ENCODE measurements at regions of chr18 and their contacts with region 1.

Region 1: GRCh38 chr18:13726232-13726971 is at the starts of genes FAM210A and RNMT:
- DNase-seq: peak; percentile 96 to 98 (median 98)
- ATAC-seq: peak; percentile 96 to 98 (median 98)
- H3K4me3 ChIP-seq: peak within 1 kb of the TSS; percentile 72 to 97 (median 86)
- H3K27ac ChIP-seq: peak within 1 kb of the TSS; percentile 84 to 99 (median 91)
- H3K4me1 ChIP-seq: peaks cover 0 to 50% (median 24%) of the 10 kb centered on the region in 12 donors
- H3K27me3 ChIP-seq: no peaks in the 10 kb centered on the region
- CTCF ChIP-seq: peak in 5 of 12 donors; percentile 19 to 46 (median 41)
- POLR2A ChIP-seq: peak in 1 of 2 donors; percentile 71
- total RNA-seq, gene FAM210A: 29.3 to 66.4 (median 48.7) TPM
- total RNA-seq, gene RNMT: 19.9 to 38.0 (median 26.6) TPM

Region 2: DNA sequence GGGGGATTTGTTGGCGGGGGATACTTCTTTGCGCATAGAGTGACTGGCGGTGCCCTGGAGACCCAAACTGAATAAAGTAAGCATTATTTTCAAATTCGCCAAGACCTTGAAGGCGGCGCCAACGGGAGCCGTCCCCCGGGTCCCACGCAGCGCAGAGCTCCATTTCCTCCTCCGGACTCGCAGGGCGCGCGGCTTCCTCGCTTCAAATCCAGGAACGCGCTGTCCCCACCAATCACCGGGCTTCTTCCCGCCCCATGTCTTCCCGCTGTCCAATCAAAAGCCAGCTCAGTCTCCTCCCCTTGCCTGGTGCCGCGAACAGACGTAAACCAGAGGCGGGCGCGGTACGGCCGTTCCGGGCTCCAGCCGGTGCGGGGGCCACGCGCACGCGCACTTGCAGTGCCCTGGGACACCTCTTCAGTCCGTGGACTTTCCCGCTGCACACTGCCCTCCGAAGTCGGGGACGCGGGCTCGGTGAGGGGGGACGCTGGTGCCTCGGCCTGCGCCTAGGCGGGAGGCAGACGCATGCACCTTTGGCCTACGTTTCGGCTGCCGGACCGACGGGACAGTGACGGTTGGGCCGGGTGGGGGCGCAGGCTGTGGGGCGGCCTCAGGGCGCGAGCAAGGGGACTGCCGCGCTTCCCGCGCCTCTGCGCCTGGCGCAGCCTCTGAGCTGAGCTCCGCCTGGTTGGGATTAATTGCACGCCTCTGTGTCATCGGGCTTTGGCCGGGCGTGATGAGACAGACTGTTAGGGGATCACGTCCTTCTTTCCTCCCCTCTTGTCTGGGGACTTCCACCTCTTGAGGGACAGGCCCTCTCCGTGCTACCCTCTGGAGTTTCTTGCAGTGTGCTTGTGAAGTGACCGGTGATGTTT is 735.2 kb before region 1 on chr18 and contains the start of gene CEP192:
- intact Hi-C with region 1: loop called in 1 of 10 experiments (anchors 10 kb)
- DNase-seq: peak; percentile 97 to 98 (median 98)
- ATAC-seq: peak; percentile 98 to 99 (median 99)
- H3K4me3 ChIP-seq: peak within 1 kb of the TSS; percentile 52 to 97 (median 84)
- H3K27ac ChIP-seq: peak within 1 kb of the TSS; percentile 69 to 95 (median 87)
- H3K4me1 ChIP-seq: peaks cover 0 to 36% (median 15%) of the 10 kb centered on the region in 12 donors
- H3K27me3 ChIP-seq: no peaks in the 10 kb centered on the region
- CTCF ChIP-seq: peak in 4 of 12 donors; percentile 21 to 31 (median 23)
- POLR2A ChIP-seq: peak; percentile 51 to 89
- total RNA-seq, gene CEP192: 21.5 to 36.3 (median 27.5) TPM

Region 3: GRCh38 chr18:13558124-13558523 is 168.3 kb before region 1 on chr18:
- intact Hi-C with region 1: loop called in 5 of 10 experiments (anchors 2 to 10 kb)
- DNase-seq: peak in 4 of 5 donors; percentile 45 to 72 (median 60)
- ATAC-seq: peak; percentile 73 to 84 (median 76)
- H3K4me3 ChIP-seq: no peak overlapping the region
- H3K27ac ChIP-seq: peak overlapping the region in 5 of 12 donors; percentile 23 to 59 (median 32)
- H3K4me1 ChIP-seq: peaks cover 3 to 68% (median 29%) of the 10 kb centered on the region in 12 donors
- H3K27me3 ChIP-seq: no peaks in the 10 kb centered on the region
- CTCF ChIP-seq: peak; percentile 48 to 75 (median 64)
- POLR2A ChIP-seq: no peak

Region 4: DNA sequence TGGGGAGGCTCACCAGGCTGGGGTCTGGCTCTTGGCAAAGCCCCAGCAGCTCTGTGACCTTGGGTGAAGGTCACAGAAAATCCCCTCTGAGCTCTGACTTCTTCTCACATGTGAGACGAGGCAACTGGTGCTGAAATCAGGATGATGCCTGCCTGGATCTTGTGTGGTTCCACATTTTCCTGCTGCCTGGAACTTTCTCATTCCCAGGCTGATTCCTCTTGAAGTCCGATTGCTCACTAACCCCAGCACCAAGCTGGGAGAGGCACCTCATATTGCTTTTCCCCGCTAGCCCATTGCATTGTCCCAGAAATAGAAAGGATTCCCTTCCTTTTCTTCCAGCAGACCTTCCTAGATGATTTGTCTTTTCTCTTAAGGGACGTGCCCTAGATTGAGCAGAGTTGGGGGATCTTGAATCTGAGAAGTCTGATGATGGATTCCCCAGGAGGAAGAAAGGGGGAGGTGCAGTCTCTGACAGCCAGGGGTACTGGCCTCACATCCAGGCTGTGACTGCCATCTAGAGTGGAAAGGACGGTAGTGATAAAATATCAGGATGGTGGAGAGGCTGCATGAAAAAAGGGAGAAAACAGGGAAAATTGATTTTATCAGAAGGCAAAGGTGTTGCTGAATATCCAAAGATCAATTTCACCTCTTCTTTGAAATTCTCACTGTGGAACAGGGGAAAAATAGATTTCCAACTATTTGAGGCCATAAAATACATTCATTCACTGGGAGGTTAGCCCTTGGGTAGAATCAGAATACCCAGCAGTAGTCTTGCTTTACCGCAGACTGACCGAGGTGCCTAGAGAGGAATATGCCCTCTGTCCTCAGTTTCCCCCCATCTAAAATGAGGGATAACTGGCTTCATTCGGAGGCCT is 96.3 kb before region 1 on chr18:
- intact Hi-C with region 1: loop called in 3 of 10 experiments (anchors 10 kb)
- DNase-seq: peak in 4 of 5 donors; percentile 58 to 67 (median 62)
- ATAC-seq: peak; percentile 82 to 90 (median 86)
- H3K4me3 ChIP-seq: no peak overlapping the region
- H3K27ac ChIP-seq: peak overlapping the region in 8 of 12 donors; percentile 5 to 72 (median 34)
- H3K4me1 ChIP-seq: peaks cover 0 to 37% (median 11%) of the 10 kb centered on the region in 12 donors
- H3K27me3 ChIP-seq: no peaks in the 10 kb centered on the region
- CTCF ChIP-seq: peak; percentile 66 to 91 (median 86)
- POLR2A ChIP-seq: no peak

Region 5: DNA sequence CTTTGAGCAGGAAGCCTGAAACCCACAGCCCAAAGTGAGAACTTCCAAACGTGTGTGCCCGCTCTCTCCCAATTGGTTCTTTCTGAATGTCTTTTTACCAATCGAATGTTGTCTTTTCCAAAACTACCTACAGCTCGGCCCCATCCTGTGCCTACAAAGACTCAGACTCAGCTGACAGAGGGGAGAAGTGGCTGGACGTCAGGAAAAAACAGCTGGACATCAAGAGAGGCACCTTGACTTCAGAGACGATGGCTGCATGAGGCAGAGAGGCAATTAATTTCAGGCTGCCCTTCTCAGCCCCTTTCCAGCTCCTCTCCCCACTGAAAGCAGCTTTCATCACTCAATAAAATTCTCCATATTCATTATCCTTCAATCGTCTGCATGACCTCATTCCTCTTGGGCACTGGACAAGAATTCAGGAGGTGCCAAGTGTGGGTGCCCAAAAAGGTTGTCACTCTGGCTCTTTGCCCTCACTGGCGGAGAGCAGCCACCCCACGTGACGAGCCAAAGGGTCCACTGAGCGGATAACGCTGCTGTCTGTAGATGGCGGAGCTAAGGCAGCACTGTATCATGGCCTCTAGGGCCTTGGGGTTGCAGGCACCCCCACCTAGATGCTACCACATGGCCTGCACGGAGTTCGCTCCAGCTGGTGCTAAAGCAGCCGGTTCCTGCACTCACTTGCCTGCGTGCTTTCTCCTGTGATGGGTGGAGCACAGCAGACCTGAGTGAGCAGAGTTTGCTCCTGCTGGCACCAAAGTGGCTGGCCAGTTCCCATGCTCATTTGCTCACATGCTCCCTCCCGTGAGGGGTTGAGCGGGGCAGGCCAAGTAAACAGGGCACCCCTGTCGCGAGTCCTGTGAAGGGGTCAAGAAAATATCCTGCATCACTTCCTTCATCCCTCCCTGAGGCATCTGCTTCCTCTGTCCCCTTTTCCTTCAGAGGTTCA is 37.9 kb before region 1 on chr18:
- intact Hi-C with region 1: loop called in 1 of 10 experiments (anchors 2 kb)
- DNase-seq: peak in 4 of 5 donors; percentile 56 to 78 (median 65)
- ATAC-seq: peak; percentile 93 to 95 (median 94)
- H3K4me3 ChIP-seq: no peak overlapping the region
- H3K27ac ChIP-seq: peak overlapping the region in 11 of 12 donors; percentile 39 to 77 (median 70)
- H3K4me1 ChIP-seq: peaks cover 0 to 43% (median 14%) of the 10 kb centered on the region in 12 donors
- H3K27me3 ChIP-seq: no peaks in the 10 kb centered on the region
- CTCF ChIP-seq: no peak
- POLR2A ChIP-seq: no peak

Region 6: DNA sequence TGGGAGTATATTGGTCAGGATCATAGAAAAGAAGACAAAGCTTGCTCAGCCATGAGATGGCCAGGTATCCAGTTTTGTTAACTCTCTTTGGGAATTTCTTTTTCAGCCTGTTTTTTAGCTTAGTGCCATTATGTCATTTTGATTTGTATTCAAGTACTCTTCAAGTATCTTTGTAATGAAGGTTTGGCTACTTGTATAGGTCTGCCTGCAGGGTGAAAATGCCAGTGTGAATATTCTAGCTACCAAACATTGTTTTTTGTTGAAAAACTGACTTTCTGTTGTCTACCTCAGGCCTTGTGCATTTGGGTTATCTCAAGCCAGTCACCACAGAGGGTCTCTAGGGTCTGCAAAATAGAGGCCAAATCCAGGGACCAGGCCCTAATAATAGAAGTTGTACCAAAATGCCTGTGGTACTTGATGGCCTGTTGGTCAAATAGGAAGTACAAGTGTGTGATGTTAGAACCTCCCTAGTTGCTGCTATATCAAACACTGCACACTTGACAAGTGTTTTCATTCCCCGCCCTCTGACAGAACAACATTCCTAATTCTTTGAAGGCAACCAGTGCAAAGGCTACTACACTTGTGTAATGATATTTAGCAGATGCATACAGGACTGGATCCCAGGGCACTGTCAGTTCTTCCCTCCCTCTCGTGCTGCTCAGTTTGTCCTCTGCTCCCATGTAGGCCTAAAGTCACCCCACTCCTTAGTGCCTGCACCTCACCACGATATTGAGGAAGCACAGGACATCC is 36.5 kb after region 1 on chr18:
- intact Hi-C with region 1: no loop called
- DNase-seq: peak in 1 of 5 donors; percentile 19
- ATAC-seq: peak; percentile 86 to 93 (median 90)
- H3K4me3 ChIP-seq: no peak overlapping the region
- H3K27ac ChIP-seq: peak overlapping the region in 9 of 12 donors; percentile 18 to 73 (median 58)
- H3K4me1 ChIP-seq: peaks cover 0 to 20% (median 2%) of the 10 kb centered on the region in 12 donors
- H3K27me3 ChIP-seq: no peaks in the 10 kb centered on the region
- CTCF ChIP-seq: no peak
- POLR2A ChIP-seq: no peak

Measured in heart left ventricle (tissue), 16 donors.